ENCODE measurements at regions of chr1 and their contacts with region 1.

Region 1: GRCh38 chr1:239413916-239414315 is 27.5 kb downstream of the CHRM3 start:
- DNase-seq: no peak
- H3K4me3 ChIP-seq: no peak overlapping the region
- H3K27ac ChIP-seq: no peak overlapping the region
- H3K4me1 ChIP-seq: no peaks in the 10 kb centered on the region
- H3K27me3 ChIP-seq: no peaks in the 10 kb centered on the region
- CTCF ChIP-seq: no peak
- POLR2A ChIP-seq: no peak

Region 2: GRCh38 chr1:239898062-239898730 is 484.3 kb after region 1 on chr1:
- intact Hi-C with region 1: loop called (anchors 10 kb)
- DNase-seq: no peak
- H3K4me3 ChIP-seq: peak overlapping the region in 2 of 4 donors; percentile 3 to 33
- H3K27ac ChIP-seq: peak overlapping the region in 2 of 4 donors; percentile 2 to 62
- H3K4me1 ChIP-seq: peaks cover 0 to 22% (median 4%) of the 10 kb centered on the region in 3 donors
- H3K27me3 ChIP-seq: no peaks in the 10 kb centered on the region
- CTCF ChIP-seq: peak; percentile 80 to 98 (median 96)
- POLR2A ChIP-seq: no peak